HCT116 (cell line): ENCODE measurements at regions of chr10 and their contacts with region 1.

Region 1: GRCh38 chr10:70146489-70147258 is at the start of gene TYSND1:
- DNase-seq: peak; percentile 98
- ATAC-seq: peak; percentile 89
- H3K4me3 ChIP-seq: peak within 1 kb of the TSS; percentile 74 to 81
- H3K27ac ChIP-seq: peak within 1 kb of the TSS; percentile 86
- H3K4me1 ChIP-seq: peaks cover 8 to 26% of the 10 kb centered on the region in 2 experiments; a peak in 3 of 4 replicates
- H3K27me3 ChIP-seq: no peaks in the 10 kb centered on the region
- CTCF ChIP-seq: peak; percentile 60 to 81 (median 61)
- POLR2A ChIP-seq: peak; percentile 95
- RAD21 ChIP-seq: peak; percentile 71
- total RNA-seq, gene TYSND1: 13.6 TPM

Region 2: DNA sequence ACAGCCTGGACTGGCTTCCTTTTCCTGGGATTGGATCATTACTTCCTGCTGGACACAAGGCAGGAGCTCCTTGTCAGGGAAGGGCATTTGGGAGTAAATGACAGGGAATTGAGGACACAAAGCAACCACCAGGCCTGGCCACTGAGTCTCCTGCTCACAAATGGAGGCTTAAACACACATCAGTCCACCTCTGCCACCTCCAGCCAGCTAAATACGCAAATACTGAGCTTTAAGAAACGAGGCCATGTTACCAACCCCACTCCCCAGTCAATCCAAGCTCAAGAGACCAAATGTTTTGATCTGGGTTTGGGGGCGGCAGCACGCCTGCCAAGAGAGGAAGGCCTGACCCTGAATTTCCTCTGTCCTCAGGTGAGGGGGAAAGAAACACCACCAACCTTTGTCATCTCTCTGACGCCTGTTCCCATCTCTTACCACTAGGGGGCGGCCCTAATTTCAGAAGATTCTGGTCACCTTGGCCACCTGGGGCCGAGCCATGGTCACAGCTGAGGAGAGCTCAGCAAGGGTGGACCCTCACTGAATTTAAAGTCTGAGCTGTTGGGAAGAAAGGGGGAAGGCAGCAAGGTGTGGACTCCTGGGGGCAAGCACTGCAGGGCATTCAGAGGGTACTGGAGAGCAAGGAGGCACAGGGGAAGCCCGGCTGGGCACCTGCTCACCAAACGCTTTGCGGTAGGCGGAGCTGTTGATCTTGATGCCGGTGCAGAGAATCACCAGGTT is 30.6 kb before region 1 on chr10:
- CTCF ChIA-PET with region 1: interaction called, 22 read pairs
- POLR2A ChIA-PET with region 1: interaction called, 7 read pairs
- RAD21 ChIA-PET with region 1: interaction called in 1 of 2 experiments, 4 read pairs
- intact Hi-C with region 1: no loop called
- DNase-seq: peak; percentile 21
- ATAC-seq: peak; percentile 86
- H3K4me3 ChIP-seq: no peak overlapping the region
- H3K27ac ChIP-seq: no peak overlapping the region
- H3K4me1 ChIP-seq: no peaks in the 10 kb centered on the region
- H3K27me3 ChIP-seq: no peaks in the 10 kb centered on the region
- CTCF ChIP-seq: peak; percentile 71 to 95 (median 89)
- POLR2A ChIP-seq: no peak
- RAD21 ChIP-seq: peak; percentile 65

Region 3: DNA sequence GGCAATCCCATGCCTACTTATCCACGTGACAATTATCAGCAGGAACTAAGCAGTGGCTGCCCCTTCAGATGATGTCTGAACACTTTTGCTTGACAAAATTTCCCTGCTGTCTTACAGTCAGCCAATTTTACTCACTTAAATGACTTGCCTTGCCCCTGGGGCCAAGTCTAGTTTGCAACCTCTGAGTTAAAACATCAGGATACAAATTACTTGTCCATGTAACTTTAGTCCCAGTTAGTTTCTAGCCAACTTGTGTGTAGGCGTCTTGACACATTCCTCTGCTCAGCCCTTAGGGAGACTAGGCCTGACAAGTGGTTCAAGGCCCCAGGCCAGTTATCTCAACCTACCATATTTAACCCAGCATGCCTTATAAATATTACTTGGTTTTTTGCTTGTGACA is 11.4 kb after region 1 on chr10:
- CTCF ChIA-PET with region 1: interaction called, 33 read pairs
- POLR2A ChIA-PET with region 1: interaction called, 4 read pairs
- RAD21 ChIA-PET with region 1: no interaction called
- intact Hi-C with region 1: no loop called
- DNase-seq: no peak
- ATAC-seq: no peak
- H3K4me3 ChIP-seq: no peak overlapping the region
- H3K27ac ChIP-seq: no peak overlapping the region
- H3K4me1 ChIP-seq: peaks cover 4 to 6% of the 10 kb centered on the region in 2 experiments; a peak in 2 of 4 replicates
- H3K27me3 ChIP-seq: no peaks in the 10 kb centered on the region
- CTCF ChIP-seq: no peak
- POLR2A ChIP-seq: no peak
- RAD21 ChIP-seq: no peak

Region 4: DNA sequence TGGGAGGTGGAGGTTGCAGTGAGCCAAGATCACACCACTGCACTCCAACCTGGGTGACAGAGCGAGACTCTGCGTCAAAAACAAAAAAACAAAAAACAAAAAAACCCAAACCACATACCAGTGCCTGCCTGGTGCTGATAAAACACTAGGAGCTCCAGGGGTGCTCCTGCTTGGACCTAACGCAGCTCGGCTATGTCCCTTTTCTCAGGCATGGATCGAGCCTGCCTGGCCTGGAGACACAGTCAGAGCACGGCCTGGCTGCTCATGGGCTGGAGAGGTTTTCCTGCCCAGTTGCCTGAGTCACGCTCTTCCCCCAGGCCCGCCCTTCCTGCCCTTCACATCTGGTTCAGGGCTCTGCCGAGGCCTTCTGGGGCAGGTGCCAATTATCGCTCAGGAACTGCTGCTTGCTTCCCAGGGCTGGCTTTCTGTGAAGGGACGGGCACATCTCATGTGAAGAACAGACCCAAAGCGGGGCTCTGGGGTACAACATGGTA is 149.8 kb after region 1 on chr10:
- CTCF ChIA-PET with region 1: no interaction called
- POLR2A ChIA-PET with region 1: no interaction called
- RAD21 ChIA-PET with region 1: no interaction called
- intact Hi-C with region 1: no loop called
- DNase-seq: peak; percentile 44
- ATAC-seq: peak; percentile 97
- H3K4me3 ChIP-seq: no peak overlapping the region
- H3K27ac ChIP-seq: peak overlapping the region; percentile 52
- H3K4me1 ChIP-seq: peaks cover 14 to 25% of the 10 kb centered on the region in 2 experiments
- H3K27me3 ChIP-seq: no peaks in the 10 kb centered on the region
- CTCF ChIP-seq: no peak
- POLR2A ChIP-seq: no peak
- RAD21 ChIP-seq: no peak

Region 5: DNA sequence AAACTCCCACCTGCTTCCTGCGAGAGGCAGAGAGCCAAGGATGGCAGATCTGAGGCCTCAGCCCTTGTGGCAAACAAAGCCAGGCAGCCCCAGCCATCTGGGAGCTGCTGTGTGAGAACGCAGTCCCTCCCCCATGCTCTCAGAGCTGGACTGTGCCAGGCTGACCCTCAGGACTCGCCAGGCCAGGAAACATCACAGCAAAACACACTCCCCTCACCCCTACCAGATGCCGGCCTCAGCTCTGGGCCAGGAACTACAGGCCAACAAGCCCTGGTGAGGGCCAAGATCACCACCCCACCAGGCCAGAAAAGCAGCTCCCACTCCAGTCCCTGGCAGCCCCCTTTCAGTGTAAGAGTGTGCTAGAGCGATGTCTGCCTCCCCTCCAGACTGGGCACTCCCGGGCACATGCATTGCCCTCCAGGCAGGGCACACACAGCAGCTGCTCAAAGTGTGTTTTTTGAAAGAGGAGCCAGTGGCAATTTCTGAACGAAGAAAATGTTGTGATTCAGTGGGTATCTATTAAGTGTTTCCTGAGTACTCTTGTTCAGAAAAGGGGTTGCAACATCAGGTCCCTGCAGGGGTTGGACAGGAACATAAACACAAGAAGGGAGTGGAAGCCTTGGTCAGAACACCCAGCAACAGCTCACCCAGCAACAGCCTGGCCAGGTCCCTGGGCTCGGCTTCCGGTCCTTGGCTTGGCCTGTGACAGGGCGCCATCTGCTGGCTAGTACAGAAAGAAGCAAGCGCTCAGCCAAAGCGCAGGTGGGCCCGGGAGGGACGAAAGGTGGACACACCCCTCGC is 217.5 kb after region 1 on chr10:
- CTCF ChIA-PET with region 1: interaction called, 31 read pairs
- POLR2A ChIA-PET with region 1: interaction called, 4 read pairs
- RAD21 ChIA-PET with region 1: interaction called in 1 of 2 experiments, 6 read pairs
- intact Hi-C with region 1: loop called (anchors 2 kb)
- DNase-seq: peak; percentile 67
- ATAC-seq: peak; percentile 99
- H3K4me3 ChIP-seq: no peak overlapping the region
- H3K27ac ChIP-seq: no peak overlapping the region; the same call in 1 of the 2 replicates
- H3K4me1 ChIP-seq: peaks cover 2 to 10% of the 10 kb centered on the region in 2 experiments; a peak in 3 of 4 replicates
- H3K27me3 ChIP-seq: no peaks in the 10 kb centered on the region
- CTCF ChIP-seq: peak; percentile 85 to 94 (median 91)
- POLR2A ChIP-seq: no peak
- RAD21 ChIP-seq: peak; percentile 99